GM12878 (cell line): ENCODE measurements at regions of chr22 and their contacts with region 1.

Region 1: DNA sequence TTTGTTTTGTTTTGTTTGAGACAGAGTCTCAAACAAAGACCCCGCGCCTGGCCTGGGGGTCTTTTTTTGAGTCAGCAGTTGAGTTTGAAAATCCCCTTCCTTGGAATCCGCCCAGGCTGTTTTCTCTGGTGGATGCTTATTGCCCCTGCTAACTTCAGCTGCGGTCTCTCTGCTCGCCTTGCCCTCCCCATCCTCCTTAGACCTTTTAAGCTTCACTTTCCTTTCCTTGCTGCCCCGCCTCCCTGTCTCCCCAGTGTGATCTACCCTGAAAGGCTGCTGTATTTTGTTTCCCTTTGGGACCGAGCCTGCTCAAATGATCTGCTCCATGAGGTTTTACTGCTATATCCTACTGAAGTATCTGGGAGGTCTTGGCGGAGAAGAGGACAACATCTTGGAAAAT is 2.5 kb downstream of the USP18 start:
- DNase-seq: peak; percentile 26
- ATAC-seq: peak; percentile 69
- H3K4me3 ChIP-seq: peak overlapping the region; percentile 75
- H3K27ac ChIP-seq: peak overlapping the region; percentile 72
- H3K4me1 ChIP-seq: peaks cover 2% of the 10 kb centered on the region; the same call in 1 of the 2 replicates
- H3K27me3 ChIP-seq: no peaks in the 10 kb centered on the region
- CTCF ChIP-seq: no peak
- EP300 ChIP-seq: no peak
- POLR2A ChIP-seq: peak; percentile 33; the same call in 1 of the 2 replicates
- RAD21 ChIP-seq: no peak

Region 2: GRCh38 chr22:17847341-17848078 is 305.0 kb before region 1 on chr22:
- CTCF ChIA-PET with region 1: no interaction called
- POLR2A ChIA-PET with region 1: interaction called, 11 read pairs
- RAD21 ChIA-PET with region 1: no interaction called
- SMC1A ChIA-PET with region 1: no interaction called
- in situ Hi-C with region 1: no loop called
- intact Hi-C with region 1: no loop called
- DNase-seq: no peak
- ATAC-seq: no peak
- H3K4me3 ChIP-seq: no peak overlapping the region
- H3K27ac ChIP-seq: no peak overlapping the region
- H3K4me1 ChIP-seq: no peaks in the 10 kb centered on the region
- H3K27me3 ChIP-seq: no peaks in the 10 kb centered on the region
- CTCF ChIP-seq: no peak
- EP300 ChIP-seq: no peak
- POLR2A ChIP-seq: no peak
- RAD21 ChIP-seq: no peak

Region 3: GRCh38 chr22:18091916-18092526 is 60.5 kb before region 1 on chr22:
- CTCF ChIA-PET with region 1: no interaction called
- POLR2A ChIA-PET with region 1: interaction called, 5 read pairs
- RAD21 ChIA-PET with region 1: interaction called, 6 read pairs
- SMC1A ChIA-PET with region 1: no interaction called
- in situ Hi-C with region 1: no loop called
- intact Hi-C with region 1: loop called (anchors 10 kb)
- DNase-seq: no peak
- ATAC-seq: peak; percentile 64
- H3K4me3 ChIP-seq: peak overlapping the region; percentile 47; the same call in 1 of the 2 replicates
- H3K27ac ChIP-seq: peak overlapping the region; percentile 90
- H3K4me1 ChIP-seq: peaks cover 53% of the 10 kb centered on the region
- H3K27me3 ChIP-seq: no peaks in the 10 kb centered on the region
- CTCF ChIP-seq: no peak
- EP300 ChIP-seq: no peak
- POLR2A ChIP-seq: peak; percentile 54; the same call in 1 of the 2 replicates
- RAD21 ChIP-seq: no peak

Region 4: GRCh38 chr22:18110194-18110953 is 42.1 kb before region 1 on chr22 and contains the start of gene TUBA8:
- CTCF ChIA-PET with region 1: interaction called, 6 read pairs
- POLR2A ChIA-PET with region 1: interaction called, 20 read pairs
- RAD21 ChIA-PET with region 1: interaction called, 7 read pairs
- SMC1A ChIA-PET with region 1: interaction called, 5 read pairs
- in situ Hi-C with region 1: no loop called
- intact Hi-C with region 1: loop called (anchors 2 kb)
- DNase-seq: no peak
- ATAC-seq: peak; percentile 64
- H3K4me3 ChIP-seq: peak within 1 kb of the TSS; percentile 65
- H3K27ac ChIP-seq: peak within 1 kb of the TSS; percentile 67
- H3K4me1 ChIP-seq: peaks cover 41% of the 10 kb centered on the region
- H3K27me3 ChIP-seq: no peaks in the 10 kb centered on the region; a peak in 1 of 4 replicates
- CTCF ChIP-seq: peak in 1 of 3 experiments; percentile 16; a peak in 1 of 6 replicates
- EP300 ChIP-seq: no peak
- POLR2A ChIP-seq: peak; percentile 73
- RAD21 ChIP-seq: 0 out of 2 replicates have a peak, but pooled peaks have one; percentile 8
- polyA plus RNA-seq, gene TUBA8: 2.2 to 5.5 TPM

Region 5: GRCh38 chr22:18133452-18133851 is 19.1 kb before region 1 on chr22:
- CTCF ChIA-PET with region 1: no interaction called
- POLR2A ChIA-PET with region 1: no interaction called
- RAD21 ChIA-PET with region 1: no interaction called
- SMC1A ChIA-PET with region 1: no interaction called
- in situ Hi-C with region 1: no loop called
- intact Hi-C with region 1: no loop called
- DNase-seq: no peak
- ATAC-seq: no peak
- H3K4me3 ChIP-seq: no peak overlapping the region
- H3K27ac ChIP-seq: no peak overlapping the region
- H3K4me1 ChIP-seq: no peaks in the 10 kb centered on the region
- H3K27me3 ChIP-seq: no peaks in the 10 kb centered on the region
- CTCF ChIP-seq: no peak
- EP300 ChIP-seq: no peak
- POLR2A ChIP-seq: no peak
- RAD21 ChIP-seq: no peak